Posterior vena cava (tissue), 2 donors: ENCODE measurements at regions of chr2 and their contacts with region 1.

Region 1: DNA sequence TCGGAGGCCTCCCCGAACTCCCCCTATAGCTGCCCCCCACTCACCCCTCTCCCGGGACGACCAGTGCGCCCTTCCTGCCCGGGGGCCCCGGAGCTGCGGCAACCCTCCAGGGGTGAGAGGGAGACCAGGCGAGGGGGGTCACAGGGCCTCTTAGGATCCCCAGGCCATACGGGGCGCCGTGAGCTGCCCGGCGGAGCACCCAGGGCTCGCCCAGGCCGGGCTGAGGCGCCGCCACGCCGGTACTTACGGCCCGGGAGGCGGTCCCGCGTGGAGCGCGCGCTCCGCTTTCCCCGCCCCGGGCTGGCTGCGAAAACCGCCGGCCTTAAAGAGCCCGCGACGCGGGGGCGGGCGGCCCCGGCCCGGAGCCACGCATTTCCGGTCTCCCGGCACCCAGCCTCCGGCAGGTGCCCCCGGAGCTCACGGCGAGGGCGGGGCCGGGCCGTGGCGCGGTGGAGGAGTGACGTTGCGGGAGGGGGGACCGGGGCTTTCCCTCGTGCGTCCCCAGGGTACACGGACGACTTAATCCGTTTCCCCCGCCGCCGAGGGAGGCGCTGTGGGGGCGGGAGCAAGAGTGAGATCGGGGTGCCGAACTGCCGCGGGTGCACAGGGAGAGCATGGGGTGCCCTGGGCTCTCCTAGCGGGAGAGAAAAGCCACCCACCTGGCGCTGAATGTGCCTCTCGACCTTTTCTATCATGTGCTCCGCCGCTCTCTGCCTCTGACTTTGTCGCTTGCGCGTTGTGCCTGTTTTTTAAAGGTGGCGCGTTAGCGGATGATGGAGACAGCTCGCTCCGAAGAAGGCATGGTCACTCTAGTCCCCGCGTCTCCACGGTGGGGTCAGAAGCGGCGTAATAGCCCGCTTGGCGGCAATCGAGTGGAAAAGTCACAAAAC is at the start of gene METTL21A:
- DNase-seq: peak; percentile 96
- total RNA-seq, gene METTL21A: 7.4 to 8.2 TPM

Region 2: GRCh38 chr2:207655000-207655399 is 29.7 kb after region 1 on chr2:
- intact Hi-C with region 1: loop called in 1 of 2 experiments (anchors 1 kb)
- DNase-seq: no peak

Region 3: GRCh38 chr2:207683879-207684627 is 58.8 kb after region 1 on chr2:
- intact Hi-C with region 1: no loop called
- DNase-seq: no peak